Activated naive CD8-positive, alpha-beta T cell treated with anti-CD3 and anti-CD28 coated beads, Interleukin-2, amount 10 ng/mL, durations not matched to agents 7 days and 5 days (primary cell): ENCODE measurements at regions of chr1 and their contacts with region 1.

Region 1: GRCh38 chr1:11907275-11908094 is 18.7 kb downstream of the KIAA2013 start:
- DNase-seq: peak; percentile 87
- ATAC-seq: peak; percentile 49
- H3K4me3 Mint-ChIP-seq: peak overlapping the region; percentile 92
- H3K27ac Mint-ChIP-seq: peak overlapping the region; percentile 100
- H3K4me1 Mint-ChIP-seq: peaks cover 38% of the 10 kb centered on the region
- H3K27me3 Mint-ChIP-seq: peaks cover 19% of the 10 kb centered on the region

Region 2: DNA sequence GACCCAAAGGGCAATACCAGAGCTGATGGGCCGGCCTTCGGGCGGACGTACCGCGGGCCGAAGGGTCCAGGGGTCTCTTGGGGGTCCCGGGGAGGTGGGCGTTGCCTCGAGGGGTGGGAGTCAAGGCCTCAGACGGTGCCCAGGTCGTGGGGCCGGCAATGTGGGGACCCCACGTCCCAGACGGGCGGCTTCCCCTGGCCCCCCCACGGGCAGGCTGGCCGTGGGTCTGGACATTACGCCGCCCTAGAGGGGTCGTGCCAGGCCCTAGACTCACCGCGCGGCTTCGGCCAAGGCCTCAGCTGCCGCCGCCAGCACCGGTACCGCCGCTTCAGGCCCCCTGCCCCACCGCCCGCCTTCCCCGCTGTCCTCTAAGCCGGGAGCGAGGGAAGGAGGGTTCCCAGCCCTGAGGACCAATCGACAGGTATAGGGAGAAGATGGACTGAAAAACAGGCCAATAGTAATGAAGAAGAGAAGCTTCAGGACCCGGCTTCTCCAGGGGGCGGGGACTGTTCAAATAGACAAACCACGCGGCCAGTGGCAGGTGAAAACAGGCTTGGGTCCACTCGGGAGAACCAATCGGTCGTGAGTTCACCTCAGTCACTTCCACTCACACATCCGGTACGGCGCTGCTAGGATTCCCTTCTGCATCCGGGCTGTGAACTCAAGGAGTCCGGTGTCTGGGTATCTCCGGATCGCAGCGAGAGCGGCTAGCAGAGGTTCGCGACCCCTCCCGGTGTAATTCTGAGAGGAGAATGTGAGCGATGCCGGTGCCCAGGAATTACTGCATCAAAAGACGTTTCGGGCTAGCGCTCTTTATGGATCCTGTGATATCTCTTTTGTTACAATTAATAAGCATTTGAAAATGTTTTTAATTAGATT is 645.1 kb before region 1 on chr1 and contains the start of gene MTOR:
- POLR2A ChIA-PET with region 1: interaction called, 11 read pairs
- DNase-seq: peak; percentile 86
- ATAC-seq: peak; percentile 98
- H3K4me3 Mint-ChIP-seq: peak within 1 kb of the TSS; percentile 94
- H3K27ac Mint-ChIP-seq: peak within 1 kb of the TSS; percentile 82
- H3K4me1 Mint-ChIP-seq: peaks cover 14% of the 10 kb centered on the region
- H3K27me3 Mint-ChIP-seq: peaks cover 3% of the 10 kb centered on the region
- total RNA-seq, gene MTOR: 40.7 to 45.4 TPM

Region 3: DNA sequence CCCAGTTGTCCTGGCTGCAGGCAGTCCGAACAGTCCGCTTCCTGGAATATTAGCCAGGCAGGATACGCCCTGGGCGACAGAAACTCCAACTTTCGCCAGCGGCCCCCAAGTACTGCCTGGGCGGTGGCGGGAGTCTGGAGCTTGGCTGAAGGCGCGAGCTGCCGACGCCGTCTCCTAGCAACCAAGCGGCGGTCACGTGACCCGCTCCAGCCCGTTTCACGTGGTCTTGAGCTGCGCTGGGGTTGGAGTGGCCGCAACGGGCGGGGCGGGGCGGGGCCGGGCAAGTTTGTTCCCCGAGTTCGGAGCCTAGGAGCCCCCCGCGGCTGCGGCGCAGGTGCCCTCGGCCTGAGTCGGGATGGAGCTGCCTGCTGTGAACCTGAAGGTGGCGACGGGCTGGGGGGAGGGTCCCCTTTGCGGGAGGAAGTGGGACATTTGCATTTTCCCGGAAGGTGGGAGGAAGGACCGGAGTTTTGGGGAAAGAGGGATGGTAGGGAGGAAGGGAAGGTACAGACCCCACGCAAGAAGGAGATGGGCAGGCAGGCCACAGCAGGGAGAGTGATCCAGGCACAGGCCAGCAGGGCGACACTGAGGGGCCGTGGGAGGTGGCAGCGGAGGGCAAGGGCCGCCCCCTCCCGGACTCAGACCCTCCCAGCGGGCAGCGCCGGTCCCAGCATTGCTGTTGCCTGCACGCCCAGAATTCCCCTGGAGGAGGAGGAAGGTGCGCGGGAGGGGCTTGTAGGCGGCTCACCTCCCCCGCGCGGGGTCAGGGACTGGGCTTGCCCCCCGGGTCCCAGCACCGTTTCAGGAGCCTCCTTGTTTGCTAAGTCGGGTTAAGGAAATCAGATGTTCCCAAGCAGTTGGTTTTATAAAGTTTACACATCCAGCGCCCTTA is 171.4 kb before region 1 on chr1 and contains the start of gene AGTRAP:
- POLR2A ChIA-PET with region 1: interaction called, 33 read pairs
- DNase-seq: peak; percentile 88
- ATAC-seq: peak; percentile 71
- H3K4me3 Mint-ChIP-seq: peak within 1 kb of the TSS; percentile 99
- H3K27ac Mint-ChIP-seq: peak within 1 kb of the TSS; percentile 98
- H3K4me1 Mint-ChIP-seq: peaks cover 64% of the 10 kb centered on the region
- H3K27me3 Mint-ChIP-seq: no peaks in the 10 kb centered on the region
- total RNA-seq, gene AGTRAP: 53.8 to 56.4 TPM

Region 4: DNA sequence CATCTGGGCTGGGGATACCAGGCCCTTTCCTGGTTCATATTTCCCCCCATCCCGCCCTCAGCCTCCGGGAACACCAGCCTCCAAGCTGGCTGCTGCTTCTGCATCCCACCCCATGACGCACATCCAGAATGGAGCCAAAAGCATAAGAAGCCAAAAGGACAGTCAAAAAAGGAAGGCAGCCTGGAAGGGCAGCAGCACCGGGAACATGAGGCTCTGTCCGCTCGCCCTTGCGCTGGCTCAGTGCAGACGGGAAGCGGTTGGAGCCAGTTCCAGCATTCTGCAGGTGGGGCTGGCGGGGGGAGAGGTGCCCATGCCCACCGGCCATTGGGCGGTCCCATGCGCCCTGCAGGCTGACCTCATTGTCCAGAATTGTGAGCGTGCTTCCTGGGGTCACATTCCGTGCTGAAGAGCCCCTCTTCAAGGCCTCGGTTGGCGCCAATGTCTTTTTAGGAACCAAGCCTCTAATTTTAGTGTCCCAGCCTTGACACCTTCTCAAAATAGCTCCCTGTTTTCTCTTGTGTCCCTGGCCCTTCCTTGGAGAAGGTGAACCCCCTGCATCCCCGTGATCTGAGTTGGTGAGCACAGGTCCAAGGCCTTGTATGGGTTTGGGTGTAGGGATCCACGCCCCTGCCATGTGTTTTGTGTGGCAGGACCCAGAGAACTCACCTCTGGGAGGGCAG is 20.4 kb before region 1 on chr1:
- POLR2A ChIA-PET with region 1: interaction called, 11 read pairs
- DNase-seq: no peak
- ATAC-seq: no peak
- H3K4me3 Mint-ChIP-seq: no peak overlapping the region
- H3K27ac Mint-ChIP-seq: no peak overlapping the region
- H3K4me1 Mint-ChIP-seq: peaks cover 5% of the 10 kb centered on the region
- H3K27me3 Mint-ChIP-seq: peaks cover 5% of the 10 kb centered on the region

Region 5: DNA sequence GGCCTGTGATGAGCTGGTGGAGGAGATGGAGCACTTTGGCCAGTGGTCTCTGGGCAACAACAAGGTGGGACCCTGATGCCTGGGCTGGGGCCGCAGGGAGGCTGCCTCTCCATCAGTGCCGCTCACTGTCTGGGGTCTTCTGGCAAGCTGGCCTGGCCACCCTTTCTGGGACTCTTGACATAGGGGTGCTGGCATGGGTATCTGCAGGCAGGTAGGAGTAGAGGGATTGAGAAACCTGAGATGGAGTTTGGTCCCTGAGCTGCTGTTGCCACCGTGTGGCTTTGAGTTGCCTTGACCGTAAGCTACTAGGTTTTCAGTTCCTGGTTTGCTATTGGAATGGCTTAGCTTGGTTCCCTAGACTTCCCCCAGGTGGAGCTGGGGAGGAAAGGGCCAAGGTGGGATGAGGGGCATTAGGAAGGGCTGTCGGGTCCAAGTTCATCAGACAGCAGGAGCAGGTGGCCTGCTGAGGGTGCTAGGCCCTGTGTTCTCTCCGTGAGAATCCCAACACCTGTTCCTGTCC is 59.6 kb after region 1 on chr1:
- POLR2A ChIA-PET with region 1: interaction called, 180 read pairs
- DNase-seq: no peak
- ATAC-seq: peak; percentile 65
- H3K4me3 Mint-ChIP-seq: no peak overlapping the region
- H3K27ac Mint-ChIP-seq: no peak overlapping the region
- H3K4me1 Mint-ChIP-seq: peaks cover 7% of the 10 kb centered on the region
- H3K27me3 Mint-ChIP-seq: no peaks in the 10 kb centered on the region

Region 6: GRCh38 chr1:12038356-12039163 is 131.1 kb after region 1 on chr1:
- POLR2A ChIA-PET with region 1: interaction called, 11 read pairs
- DNase-seq: no peak
- ATAC-seq: no peak
- H3K4me3 Mint-ChIP-seq: no peak overlapping the region
- H3K27ac Mint-ChIP-seq: peak overlapping the region; percentile 8
- H3K4me1 Mint-ChIP-seq: no peaks in the 10 kb centered on the region
- H3K27me3 Mint-ChIP-seq: no peaks in the 10 kb centered on the region

Region 7: GRCh38 chr1:12153181-12153785 is 245.8 kb after region 1 on chr1:
- POLR2A ChIA-PET with region 1: interaction called, 12 read pairs
- DNase-seq: no peak
- ATAC-seq: no peak
- H3K4me3 Mint-ChIP-seq: peak overlapping the region; percentile 18
- H3K27ac Mint-ChIP-seq: peak overlapping the region; percentile 99
- H3K4me1 Mint-ChIP-seq: peaks cover 84% of the 10 kb centered on the region
- H3K27me3 Mint-ChIP-seq: no peaks in the 10 kb centered on the region